ENCODE measurements at regions of chr17 and their contacts with region 1.

Region 1: GRCh38 chr17:50397111-50397918 is at the start of gene LRRC59:
- DNase-seq: peak; percentile 99
- H3K4me3 Mint-ChIP-seq: peak within 1 kb of the TSS; percentile 92
- H3K27ac Mint-ChIP-seq: peak within 1 kb of the TSS; percentile 90
- H3K4me1 Mint-ChIP-seq: peaks cover 28% of the 10 kb centered on the region
- H3K27me3 Mint-ChIP-seq: no peaks in the 10 kb centered on the region
- total RNA-seq, gene LRRC59: 113 and 117 TPM in 2 replicates

Region 2: GRCh38 chr17:50148226-50149090 is 248.9 kb before region 1 on chr17:
- intact Hi-C with region 1: no loop called
- DNase-seq: peak; percentile 86
- H3K4me3 Mint-ChIP-seq: peak overlapping the region; percentile 92
- H3K27ac Mint-ChIP-seq: peak overlapping the region; percentile 96
- H3K4me1 Mint-ChIP-seq: peaks cover 53% of the 10 kb centered on the region
- H3K27me3 Mint-ChIP-seq: no peaks in the 10 kb centered on the region

Region 3: GRCh38 chr17:50161023-50161910 is 236.0 kb before region 1 on chr17:
- intact Hi-C with region 1: no loop called
- DNase-seq: peak; percentile 99
- H3K4me3 Mint-ChIP-seq: peak overlapping the region; percentile 80
- H3K27ac Mint-ChIP-seq: peak overlapping the region; percentile 97
- H3K4me1 Mint-ChIP-seq: peaks cover 36% of the 10 kb centered on the region
- H3K27me3 Mint-ChIP-seq: peaks cover 3% of the 10 kb centered on the region

Region 4: DNA sequence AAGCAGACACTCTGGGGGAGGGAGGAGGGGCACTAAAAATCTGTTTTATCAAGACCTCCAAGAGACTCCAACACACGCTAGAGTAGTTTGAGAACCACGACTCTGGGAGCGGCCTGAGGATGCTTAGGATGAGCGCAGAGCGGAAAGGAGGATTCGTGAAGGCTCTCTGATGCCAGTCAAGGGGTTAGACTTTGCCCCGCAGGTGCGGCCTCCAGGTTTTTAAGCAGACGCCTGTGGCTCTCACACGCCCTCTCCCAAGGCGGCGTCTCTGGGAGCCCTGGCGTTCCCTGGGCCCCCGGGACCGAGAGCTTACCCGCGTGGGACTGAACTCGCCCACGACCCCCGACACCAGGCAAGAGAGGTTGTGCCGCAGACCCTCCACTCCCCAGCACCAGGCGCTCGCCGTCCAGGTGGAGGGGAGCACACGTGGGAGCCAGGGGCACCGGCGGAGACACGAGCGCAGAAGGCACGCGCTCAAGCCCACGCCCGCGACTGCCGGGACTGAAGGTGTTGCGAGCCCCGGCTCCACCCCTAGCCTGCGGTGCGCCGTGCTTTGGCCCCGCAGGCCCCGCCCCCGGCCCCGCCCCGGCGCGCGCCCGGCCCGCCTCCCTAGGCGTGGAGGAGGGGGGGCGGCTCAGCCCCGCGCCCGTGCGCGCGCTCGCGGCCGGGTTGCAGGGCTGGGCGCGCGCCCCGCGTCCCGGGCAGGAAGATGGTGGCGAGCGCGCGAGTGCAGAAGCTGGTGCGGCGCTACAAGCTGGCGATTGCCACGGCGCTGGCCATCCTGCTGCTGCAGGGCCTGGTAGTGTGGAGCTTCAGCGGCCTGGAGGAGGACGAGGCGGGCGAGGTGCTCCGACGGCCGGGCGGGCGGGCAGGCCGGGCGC is 51.6 kb before region 1 on chr17 and contains the start of gene XYLT2:
- intact Hi-C with region 1: loop called (anchors 1 kb)
- DNase-seq: peak; percentile 97
- H3K4me3 Mint-ChIP-seq: peak within 1 kb of the TSS; percentile 95
- H3K27ac Mint-ChIP-seq: peak within 1 kb of the TSS; percentile 96
- H3K4me1 Mint-ChIP-seq: peaks cover 30% of the 10 kb centered on the region
- H3K27me3 Mint-ChIP-seq: peaks cover under 1% of the 10 kb centered on the region
- total RNA-seq, gene XYLT2: 65.3 and 66.5 TPM in 2 replicates

Region 5: DNA sequence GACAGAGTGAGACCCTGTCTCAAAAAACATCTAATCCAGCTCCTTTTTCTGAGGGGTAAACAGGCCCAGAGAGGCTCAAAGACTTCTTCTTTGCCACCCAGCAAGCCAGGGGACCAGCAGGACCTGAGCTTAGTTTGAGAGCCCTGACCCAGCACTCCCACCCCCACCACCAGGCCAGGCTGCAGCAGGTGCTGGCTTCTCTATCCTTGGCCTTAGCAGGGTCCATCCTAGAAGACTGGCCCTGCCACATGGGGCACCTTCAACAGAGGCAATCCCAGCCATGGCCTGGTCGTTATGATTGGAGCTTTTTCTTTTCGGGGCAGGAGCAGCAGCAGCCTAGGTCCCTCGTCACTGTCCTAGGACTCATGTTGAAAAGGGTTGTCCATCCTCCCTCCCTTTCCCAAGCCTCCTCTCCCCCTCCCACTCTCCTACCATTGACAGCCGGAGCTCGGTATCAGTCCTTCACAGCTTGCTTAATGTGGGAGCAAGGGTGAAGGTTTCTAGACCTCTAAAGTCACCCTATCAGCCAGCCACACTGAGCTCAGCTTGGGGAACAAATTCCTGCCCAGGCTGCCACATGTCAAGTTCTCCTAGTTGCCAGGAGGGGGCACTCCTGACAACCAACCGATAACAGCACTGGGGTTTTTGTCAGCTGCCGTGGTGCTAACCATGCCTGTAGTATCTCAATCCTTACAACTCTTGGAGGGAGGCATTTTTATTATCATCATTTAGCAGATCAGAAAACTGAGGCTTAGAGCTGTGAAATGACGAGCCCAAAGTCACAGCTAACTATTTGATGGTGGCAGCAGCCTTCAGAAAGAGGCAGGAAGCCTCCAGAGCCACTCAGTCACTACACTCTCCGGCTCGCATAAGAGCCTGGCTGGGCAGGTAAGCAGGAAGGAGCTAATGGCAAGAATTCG is 35.5 kb before region 1 on chr17:
- intact Hi-C with region 1: loop called (anchors 5 kb)
- DNase-seq: peak; percentile 86
- H3K4me3 Mint-ChIP-seq: no peak overlapping the region
- H3K27ac Mint-ChIP-seq: peak overlapping the region; percentile 80
- H3K4me1 Mint-ChIP-seq: peaks cover 14% of the 10 kb centered on the region
- H3K27me3 Mint-ChIP-seq: no peaks in the 10 kb centered on the region

Region 6: DNA sequence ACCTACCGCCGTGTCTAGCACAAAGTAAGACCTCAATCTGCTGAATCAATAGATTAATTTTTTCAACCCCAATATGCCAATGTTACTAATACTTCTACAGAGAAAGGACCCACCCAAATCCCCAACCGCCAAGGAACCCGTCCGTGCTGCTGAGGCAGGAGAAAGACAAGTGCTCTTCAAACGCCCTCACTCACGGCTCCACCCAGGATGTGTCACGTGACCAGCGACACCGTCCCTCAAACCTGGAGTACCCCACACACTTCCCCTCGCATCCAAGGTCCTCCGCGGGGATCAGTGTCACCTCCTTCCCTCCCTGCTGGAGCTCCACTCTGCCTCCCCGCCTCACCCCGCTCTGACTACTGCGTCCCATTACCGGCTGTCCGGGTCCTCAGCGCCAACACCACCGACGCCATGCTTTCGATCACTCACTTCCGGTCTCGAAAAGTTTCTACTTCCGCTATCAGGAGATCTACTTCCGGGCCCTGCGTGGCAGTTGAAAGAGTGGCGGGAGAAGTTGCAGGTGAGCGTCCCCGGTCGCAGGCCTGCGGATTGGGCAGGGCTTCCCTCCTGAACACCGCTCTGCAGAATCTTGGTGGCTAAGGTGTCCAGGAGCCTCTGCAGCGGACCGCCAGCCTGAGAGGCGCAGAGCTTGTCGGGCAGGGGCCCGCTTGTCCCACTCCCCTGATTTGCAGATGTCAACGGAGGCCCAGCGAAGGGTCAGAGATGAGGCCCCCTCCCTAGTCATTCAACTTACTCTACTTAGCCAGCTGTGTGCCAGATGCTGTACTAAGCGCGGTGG is 24.4 kb before region 1 on chr17 and contains the starts of genes EME1 and MRPL27:
- intact Hi-C with region 1: loop called (anchors 1 kb)
- DNase-seq: peak; percentile 96
- H3K4me3 Mint-ChIP-seq: peak within 1 kb of the TSS; percentile 98
- H3K27ac Mint-ChIP-seq: peak within 1 kb of the TSS; percentile 100
- H3K4me1 Mint-ChIP-seq: peaks cover 28% of the 10 kb centered on the region
- H3K27me3 Mint-ChIP-seq: no peaks in the 10 kb centered on the region
- total RNA-seq, gene EME1: 30.7 and 35.4 TPM in 2 replicates
- total RNA-seq, gene MRPL27: 80.5 and 83.3 TPM in 2 replicates

Region 7: DNA sequence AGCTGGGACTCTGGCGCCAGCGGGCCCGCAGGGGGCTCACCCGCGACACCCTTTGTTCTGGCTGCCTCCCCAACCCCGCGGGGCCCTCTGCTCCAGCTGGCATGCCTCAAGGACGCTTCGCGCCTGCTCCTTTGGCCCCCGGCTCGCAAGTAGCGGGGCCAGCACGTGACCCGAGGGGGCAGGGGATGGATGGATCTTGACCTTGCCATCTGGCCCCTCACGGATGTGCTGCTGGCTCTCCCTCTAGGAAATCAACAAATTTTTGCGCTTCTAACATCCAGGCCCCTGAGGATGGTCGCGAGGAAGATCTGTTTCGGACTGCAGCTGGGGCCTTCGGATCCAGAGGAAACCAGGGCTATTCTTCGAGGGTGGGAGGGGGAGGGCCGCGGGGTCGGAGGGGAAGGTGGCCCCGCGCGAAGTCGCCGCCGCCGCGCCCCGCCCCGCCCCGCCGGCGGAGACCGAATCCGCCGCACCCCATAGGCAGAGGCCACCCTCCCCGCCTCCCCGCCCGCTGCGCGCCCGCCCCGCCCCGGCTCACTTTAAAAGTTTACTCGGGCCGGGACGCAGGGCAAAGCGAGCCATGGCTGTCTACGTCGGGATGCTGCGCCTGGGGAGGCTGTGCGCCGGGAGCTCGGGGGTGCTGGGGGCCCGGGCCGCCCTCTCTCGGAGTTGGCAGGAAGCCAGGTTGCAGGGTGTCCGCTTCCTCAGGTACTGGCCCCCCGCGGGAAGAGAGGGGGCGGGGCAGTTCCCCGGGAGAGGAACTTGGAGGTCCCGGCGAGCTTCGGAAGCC is 28.6 kb after region 1 on chr17 and contains the start of gene ACSF2:
- intact Hi-C with region 1: loop called (anchors 1 kb)
- DNase-seq: peak; percentile 92
- H3K4me3 Mint-ChIP-seq: peak within 1 kb of the TSS; percentile 87
- H3K27ac Mint-ChIP-seq: peak within 1 kb of the TSS; percentile 86
- H3K4me1 Mint-ChIP-seq: peaks cover 29% of the 10 kb centered on the region
- H3K27me3 Mint-ChIP-seq: no peaks in the 10 kb centered on the region
- total RNA-seq, gene ACSF2: 13.6 and 16.5 TPM in 2 replicates